ENCODE measurements at regions of chr13 and their contacts with region 1.

Region 1: DNA sequence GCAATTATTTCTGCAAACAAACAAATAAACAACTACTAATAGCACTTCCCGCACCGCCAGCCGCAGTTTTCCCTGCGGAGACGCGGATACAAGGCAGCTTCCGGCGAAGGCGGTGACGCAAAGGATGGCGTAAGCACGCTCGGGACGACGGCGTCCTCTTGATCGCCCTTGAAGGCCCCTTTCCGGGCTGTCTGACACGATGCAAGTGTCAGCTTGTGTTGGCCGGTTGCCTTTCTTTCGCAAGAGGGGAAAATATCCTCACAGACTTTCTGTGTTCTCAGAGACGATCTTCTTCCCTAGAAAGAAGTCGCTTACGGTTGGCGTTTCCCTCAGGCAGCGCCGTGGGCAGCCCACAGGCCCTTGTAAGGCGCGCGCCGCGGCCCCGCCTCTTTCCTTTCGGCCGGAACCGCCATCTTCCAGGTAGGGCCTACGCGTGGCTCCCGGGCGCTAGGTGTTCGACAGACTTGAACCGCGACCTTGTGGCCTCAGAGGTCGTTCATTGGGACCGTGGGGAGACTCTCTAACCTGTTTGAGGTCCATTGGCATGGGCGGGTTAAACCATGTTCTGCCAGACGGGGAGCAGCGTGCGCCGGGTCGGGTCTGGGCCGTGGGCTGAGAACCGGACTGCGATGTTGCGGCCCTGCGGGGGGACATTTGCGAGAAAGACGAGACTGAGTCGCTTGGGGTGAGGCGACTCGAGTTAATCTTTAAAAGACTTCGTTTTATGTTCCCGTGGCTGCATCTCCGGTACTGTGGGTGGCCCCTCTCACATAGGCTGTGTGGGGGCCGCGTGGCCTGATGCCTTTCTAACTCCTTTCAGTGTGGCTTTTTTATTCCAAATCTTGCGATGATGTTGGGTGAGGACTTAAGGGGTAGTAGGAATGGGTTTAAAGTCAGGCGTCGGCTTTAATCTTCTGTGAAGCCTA is at the start of gene RPL21:
- DNase-seq: peak; percentile 85 to 95 (median 93)
- ATAC-seq: peak; percentile 95
- H3K4me3 ChIP-seq: peak within 1 kb of the TSS; percentile 82
- H3K4me3 Mint-ChIP-seq: peak within 1 kb of the TSS; percentile 93 to 99 (median 98)
- H3K27ac ChIP-seq: peak within 1 kb of the TSS; percentile 98
- H3K27ac Mint-ChIP-seq: peak within 1 kb of the TSS; percentile 98 to 100 (median 99)
- H3K4me1 ChIP-seq: peaks cover 29 to 35% of the 10 kb centered on the region in 2 donors
- H3K4me1 Mint-ChIP-seq: peaks cover 32 to 78% (median 49%) of the 10 kb centered on the region in 7 donors
- H3K27me3 ChIP-seq: no peaks in the 10 kb centered on the region
- H3K27me3 Mint-ChIP-seq: no peaks in the 10 kb centered on the region
- total RNA-seq, gene RPL21: 962 to 2,668 (median 2,384) TPM

Region 2: DNA sequence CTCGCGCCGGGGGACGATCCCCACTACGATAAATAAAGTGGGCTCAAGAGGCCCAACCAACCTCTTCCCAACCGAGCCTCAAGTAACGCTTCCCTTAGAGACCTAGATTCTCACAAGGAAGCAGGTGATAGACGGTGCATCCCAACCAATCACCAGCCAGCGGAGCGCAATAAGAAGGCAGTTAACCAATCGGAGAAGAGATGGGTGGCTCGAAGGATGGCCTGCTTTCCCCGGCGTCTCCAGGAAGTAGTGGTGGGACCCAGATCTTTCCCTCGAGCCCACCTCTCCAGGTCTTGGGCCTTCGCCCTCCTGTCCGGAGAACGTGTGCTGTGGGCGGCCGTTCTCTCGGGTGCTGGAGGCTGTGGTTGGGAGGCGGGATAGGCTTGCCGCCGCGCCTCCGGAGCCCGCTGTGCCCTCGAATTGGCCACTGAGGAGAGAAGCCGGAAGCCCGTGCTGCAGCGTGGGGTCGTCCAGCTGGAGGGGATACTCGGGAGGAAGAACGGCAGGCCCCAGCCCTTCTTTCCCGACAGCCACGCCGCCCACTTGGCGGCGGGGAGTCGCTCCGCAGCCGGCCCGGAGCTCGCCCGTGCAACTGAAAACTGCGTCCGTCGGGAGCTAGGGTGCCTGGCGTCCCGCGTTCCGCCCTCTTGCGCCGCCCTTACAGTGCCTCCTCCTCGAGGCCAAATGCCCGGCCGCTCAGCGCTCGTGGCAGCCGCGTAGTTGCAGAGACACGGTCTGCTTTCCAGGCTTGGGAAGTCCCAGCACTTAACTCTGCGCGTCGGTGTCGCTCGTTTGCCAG is 1029.5 kb before region 1 on chr13 and contains the start of gene RNF6:
- CTCF ChIA-PET with region 1: no interaction called
- POLR2A ChIA-PET with region 1: no interaction called
- intact Hi-C with region 1: loop called in 1 of 2 experiments (anchors 1 kb)
- DNase-seq: peak; percentile 83 to 92 (median 89)
- ATAC-seq: peak; percentile 95
- H3K4me3 ChIP-seq: peak within 1 kb of the TSS; percentile 96
- H3K4me3 Mint-ChIP-seq: peak within 1 kb of the TSS; percentile 95 to 100 (median 100)
- H3K27ac ChIP-seq: peak within 1 kb of the TSS; percentile 97
- H3K27ac Mint-ChIP-seq: peak within 1 kb of the TSS; percentile 93 to 100 (median 100)
- H3K4me1 ChIP-seq: peaks cover 16 to 17% of the 10 kb centered on the region in 2 donors
- H3K4me1 Mint-ChIP-seq: peaks cover 25 to 54% (median 49%) of the 10 kb centered on the region in 7 donors
- H3K27me3 ChIP-seq: no peaks in the 10 kb centered on the region
- H3K27me3 Mint-ChIP-seq: peaks cover 0 to 3% (median 0%) of the 10 kb centered on the region in 5 donors
- total RNA-seq, gene RNF6: 31.0 to 45.6 (median 44.6) TPM

Region 3: GRCh38 chr13:27130979-27131623 is 120.3 kb before region 1 on chr13:
- CTCF ChIA-PET with region 1: no interaction called
- POLR2A ChIA-PET with region 1: no interaction called
- intact Hi-C with region 1: loop called in 1 of 2 experiments (anchors 1 kb)
- DNase-seq: peak in 3 of 9 donors; percentile 13 to 71 (median 46)
- ATAC-seq: peak; percentile 90
- H3K4me3 ChIP-seq: no peak overlapping the region
- H3K4me3 Mint-ChIP-seq: peak overlapping the region in 5 of 10 donors; percentile 29 to 71 (median 47)
- H3K27ac ChIP-seq: no peak overlapping the region
- H3K27ac Mint-ChIP-seq: peak overlapping the region in 5 of 9 donors; percentile 60 to 87 (median 76)
- H3K4me1 ChIP-seq: peaks cover 0 to 14% of the 10 kb centered on the region in 2 donors
- H3K4me1 Mint-ChIP-seq: peaks cover 46 to 89% (median 82%) of the 10 kb centered on the region in 7 donors
- H3K27me3 ChIP-seq: no peaks in the 10 kb centered on the region
- H3K27me3 Mint-ChIP-seq: no peaks in the 10 kb centered on the region

Region 4: DNA sequence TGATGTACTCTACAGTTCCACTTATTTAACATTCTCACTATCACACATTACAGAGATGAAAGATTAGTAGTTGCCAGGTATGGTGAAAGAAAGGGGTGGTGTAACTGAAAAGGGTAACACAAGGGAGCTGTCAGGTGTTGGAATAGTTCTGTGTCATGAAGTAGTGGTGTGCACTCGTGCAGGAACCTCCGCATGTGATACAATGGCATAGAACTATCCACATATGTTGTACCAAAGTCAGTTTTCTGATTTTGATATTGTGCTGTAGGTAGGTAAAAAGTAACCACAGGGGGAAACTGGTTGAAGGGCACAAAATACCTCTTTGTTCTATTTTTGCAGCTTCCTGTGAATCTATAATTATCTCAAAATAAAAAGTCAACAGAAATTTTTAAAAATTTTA is 24.4 kb before region 1 on chr13:
- CTCF ChIA-PET with region 1: no interaction called
- POLR2A ChIA-PET with region 1: no interaction called
- intact Hi-C with region 1: no loop called
- DNase-seq: peak in 2 of 9 donors; percentile 4 to 11
- ATAC-seq: no peak
- H3K4me3 ChIP-seq: no peak overlapping the region
- H3K4me3 Mint-ChIP-seq: peak overlapping the region in 7 of 10 donors; percentile 1 to 48 (median 21)
- H3K27ac ChIP-seq: no peak overlapping the region
- H3K27ac Mint-ChIP-seq: peak overlapping the region in 1 of 9 donors; percentile 72
- H3K4me1 ChIP-seq: peaks cover 0 to 8% of the 10 kb centered on the region in 2 donors
- H3K4me1 Mint-ChIP-seq: peaks cover 0 to 27% (median 10%) of the 10 kb centered on the region in 7 donors
- H3K27me3 ChIP-seq: no peaks in the 10 kb centered on the region
- H3K27me3 Mint-ChIP-seq: peaks cover 0 to 18% (median 0%) of the 10 kb centered on the region in 5 donors

Region 5: DNA sequence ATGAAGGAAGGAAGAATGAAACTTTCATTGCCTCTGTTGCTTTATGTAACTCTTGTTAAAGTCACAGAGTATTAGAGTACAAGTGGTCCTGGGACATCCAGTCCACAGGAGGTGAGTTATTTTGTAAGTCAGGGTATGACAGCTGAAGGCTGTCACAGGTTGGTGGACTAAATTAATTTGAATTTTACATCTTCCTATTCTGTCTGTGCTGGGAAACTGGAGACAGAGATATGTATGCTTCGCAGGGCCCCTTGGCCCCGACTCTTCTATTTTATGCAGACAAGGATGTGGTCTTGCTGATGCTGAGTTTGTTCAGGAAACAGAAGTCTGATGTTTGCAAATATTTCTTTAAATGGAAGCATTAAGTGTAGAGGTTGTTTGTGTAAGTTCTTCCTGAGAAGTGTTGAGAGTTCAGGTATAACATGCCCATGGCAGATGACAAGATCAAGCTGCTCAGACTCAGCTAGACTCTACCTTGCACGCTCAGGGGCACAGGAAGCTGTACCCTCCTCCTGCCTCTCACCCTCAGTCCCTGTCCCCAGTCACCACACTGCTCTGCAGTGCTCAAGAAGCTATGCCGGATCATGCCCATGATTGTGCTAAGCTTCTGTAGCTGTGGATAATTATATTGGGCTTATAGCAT is 42.6 kb after region 1 on chr13:
- CTCF ChIA-PET with region 1: no interaction called
- POLR2A ChIA-PET with region 1: interaction called, 6 read pairs
- intact Hi-C with region 1: loop called in 1 of 2 experiments (anchors 1 kb)
- DNase-seq: peak in 7 of 9 donors; percentile 35 to 63 (median 57)
- ATAC-seq: peak; percentile 75
- H3K4me3 ChIP-seq: no peak overlapping the region
- H3K4me3 Mint-ChIP-seq: peak overlapping the region; percentile 16 to 84 (median 64)
- H3K27ac ChIP-seq: peak overlapping the region; percentile 61
- H3K27ac Mint-ChIP-seq: peak overlapping the region; percentile 31 to 96 (median 91)
- H3K4me1 ChIP-seq: peaks cover 0 to 33% of the 10 kb centered on the region in 2 donors
- H3K4me1 Mint-ChIP-seq: peaks cover 17 to 64% (median 38%) of the 10 kb centered on the region in 7 donors
- H3K27me3 ChIP-seq: no peaks in the 10 kb centered on the region
- H3K27me3 Mint-ChIP-seq: no peaks in the 10 kb centered on the region

Region 6: DNA sequence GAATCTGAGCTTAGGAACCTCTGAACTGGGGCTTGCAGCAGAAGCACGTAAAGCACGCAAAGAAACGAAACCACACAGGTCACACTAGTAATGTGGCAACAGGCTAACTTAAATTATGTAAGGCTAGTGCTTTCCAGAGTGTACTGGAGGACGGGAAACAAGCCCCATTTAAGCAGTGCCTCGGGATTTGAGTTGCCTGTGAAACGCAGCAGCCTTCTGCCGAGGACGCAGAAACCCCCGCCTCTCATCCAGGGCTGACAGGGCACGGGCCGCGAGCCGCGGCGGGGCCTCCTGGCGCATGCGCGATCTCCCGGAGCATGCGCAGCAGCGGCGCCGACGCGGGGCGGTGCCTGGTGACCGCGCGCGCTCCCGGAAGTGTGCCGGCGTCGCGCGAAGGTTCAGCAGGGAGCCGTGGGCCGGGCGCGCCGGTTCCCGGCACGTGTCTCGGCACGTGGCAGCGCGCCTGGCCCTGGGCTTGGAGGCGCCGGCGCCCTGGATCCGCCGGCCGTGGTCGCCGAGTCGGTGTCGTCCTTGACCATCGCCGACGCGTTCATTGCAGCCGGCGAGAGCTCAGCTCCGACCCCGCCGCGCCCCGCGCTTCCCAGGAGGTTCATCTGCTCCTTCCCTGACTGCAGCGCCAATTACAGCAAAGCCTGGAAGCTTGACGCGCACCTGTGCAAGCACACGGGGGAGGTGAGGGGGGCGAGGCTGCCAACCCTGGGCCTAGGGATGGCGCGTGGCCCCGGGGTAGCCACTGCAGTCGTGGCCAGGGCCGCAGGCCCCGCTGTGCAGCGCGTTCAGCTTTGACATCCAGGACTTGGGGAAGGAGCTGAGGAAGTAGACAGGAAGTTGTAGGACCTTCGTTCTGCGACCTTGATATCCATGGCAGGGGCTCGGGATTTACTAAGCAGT is 173.1 kb after region 1 on chr13 and contains the start of gene GTF3A:
- CTCF ChIA-PET with region 1: no interaction called
- POLR2A ChIA-PET with region 1: no interaction called
- intact Hi-C with region 1: loop called (anchors 1 kb)
- DNase-seq: peak; percentile 83 to 97 (median 93)
- ATAC-seq: peak; percentile 77
- H3K4me3 ChIP-seq: peak within 1 kb of the TSS; percentile 71
- H3K4me3 Mint-ChIP-seq: peak within 1 kb of the TSS; percentile 81 to 96 (median 92)
- H3K27ac ChIP-seq: peak within 1 kb of the TSS; percentile 86
- H3K27ac Mint-ChIP-seq: peak within 1 kb of the TSS; percentile 88 to 98 (median 95)
- H3K4me1 ChIP-seq: peaks cover 24 to 45% of the 10 kb centered on the region in 2 donors
- H3K4me1 Mint-ChIP-seq: peaks cover 27 to 47% (median 42%) of the 10 kb centered on the region in 7 donors
- H3K27me3 ChIP-seq: no peaks in the 10 kb centered on the region
- H3K27me3 Mint-ChIP-seq: no peaks in the 10 kb centered on the region
- total RNA-seq, gene GTF3A: 123 to 254 (median 206) TPM

Measured in naive thymus-derived CD4-positive, alpha-beta T cell (primary cell).